Left cardiac atrium (tissue), 4 donors: ENCODE measurements at regions of chr11 and their contacts with region 1.

Region 1: DNA sequence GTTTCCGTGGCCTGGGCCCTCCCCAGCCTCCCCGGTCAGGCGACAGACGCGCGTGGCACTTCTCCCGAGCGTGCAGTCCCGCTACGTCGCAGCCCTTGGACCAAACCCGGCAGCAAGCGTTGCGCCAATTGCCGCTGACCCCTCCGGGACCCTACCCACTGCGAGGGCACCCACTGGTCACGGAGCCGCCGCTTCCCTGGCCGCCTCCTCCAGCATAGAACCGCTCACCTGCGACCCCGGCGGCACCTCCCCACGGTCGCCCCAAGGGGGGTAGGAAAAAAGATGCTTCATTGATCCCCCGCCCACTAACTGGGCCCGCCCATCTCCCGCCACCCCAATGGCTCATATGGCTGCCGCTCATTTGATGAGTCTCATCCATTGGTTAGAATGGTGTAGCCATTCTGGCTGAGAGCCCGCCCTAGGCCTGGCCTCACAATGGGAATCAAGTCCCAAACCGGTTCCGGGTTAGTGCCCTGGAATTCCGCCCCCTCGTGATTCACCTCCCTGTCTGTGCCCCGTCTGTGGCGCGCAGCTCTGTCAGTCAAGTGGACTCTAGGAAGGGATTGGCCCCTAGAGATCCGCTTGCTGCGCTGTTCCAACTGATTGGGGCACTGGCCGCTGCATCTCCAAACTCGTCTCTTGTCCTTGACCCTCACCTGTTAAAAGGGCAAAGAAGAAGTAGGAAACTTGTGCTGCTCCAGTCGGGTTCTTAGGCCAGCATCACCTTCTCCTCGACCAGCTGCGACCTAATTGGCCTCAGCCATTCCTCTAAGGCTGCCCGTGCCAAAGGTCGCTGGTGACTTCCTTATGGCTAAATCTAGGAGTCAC is at the start of gene MSANTD4:
- DNase-seq: peak; percentile 100
- ATAC-seq: peak; percentile 99
- total RNA-seq, gene MSANTD4: 16.8 to 19.5 TPM

Region 2: DNA sequence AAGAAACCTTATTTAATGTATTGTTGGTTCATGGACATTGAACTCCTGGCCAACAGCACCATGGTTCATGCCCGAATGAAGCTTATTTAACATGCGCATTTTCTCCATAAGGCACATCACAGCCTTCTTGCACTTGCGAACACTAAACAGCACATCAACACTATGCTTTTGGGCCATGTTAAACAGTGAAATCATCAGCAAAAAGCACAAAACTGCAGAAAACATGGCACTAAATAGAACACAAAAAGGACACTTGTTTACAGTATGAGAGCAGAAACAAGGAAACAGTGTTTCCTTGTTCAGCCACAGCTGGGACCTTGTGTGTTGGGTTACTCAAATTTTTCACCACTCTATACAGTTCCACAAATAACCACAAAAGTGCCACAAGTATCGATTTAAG is 122.4 kb before region 1 on chr11:
- intact Hi-C with region 1: no loop called
- DNase-seq: no peak
- ATAC-seq: no peak

Region 3: DNA sequence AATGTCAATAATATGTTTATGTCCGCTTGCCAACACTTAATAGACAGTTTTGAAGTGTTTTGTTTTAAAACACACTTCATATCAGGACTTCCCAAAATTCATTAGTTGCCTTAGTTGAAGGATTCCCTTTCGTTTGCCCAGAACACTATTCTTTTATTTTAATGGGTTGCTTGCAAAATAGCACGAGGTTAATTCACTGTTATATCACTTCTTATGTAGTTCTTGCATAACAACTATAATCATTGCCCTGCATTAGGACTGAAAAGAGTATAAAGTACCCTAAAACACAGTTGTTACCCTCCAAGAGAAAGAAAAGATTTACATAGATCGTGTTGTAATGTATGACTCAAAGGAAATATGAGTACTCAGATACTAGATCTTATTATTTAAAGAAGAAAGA is 73.0 kb before region 1 on chr11:
- intact Hi-C with region 1: no loop called
- DNase-seq: no peak
- ATAC-seq: no peak

Region 4: GRCh38 chr11:106076919-106077608 is 54.9 kb after region 1 on chr11 and contains the start of gene KBTBD3:
- intact Hi-C with region 1: loop called (anchors 5 to 10 kb)
- DNase-seq: peak; percentile 99
- ATAC-seq: peak; percentile 98
- total RNA-seq, gene KBTBD3: 8.3 to 8.5 TPM